ENCODE measurements at regions of chr1 and their contacts with region 1.

Region 1: DNA sequence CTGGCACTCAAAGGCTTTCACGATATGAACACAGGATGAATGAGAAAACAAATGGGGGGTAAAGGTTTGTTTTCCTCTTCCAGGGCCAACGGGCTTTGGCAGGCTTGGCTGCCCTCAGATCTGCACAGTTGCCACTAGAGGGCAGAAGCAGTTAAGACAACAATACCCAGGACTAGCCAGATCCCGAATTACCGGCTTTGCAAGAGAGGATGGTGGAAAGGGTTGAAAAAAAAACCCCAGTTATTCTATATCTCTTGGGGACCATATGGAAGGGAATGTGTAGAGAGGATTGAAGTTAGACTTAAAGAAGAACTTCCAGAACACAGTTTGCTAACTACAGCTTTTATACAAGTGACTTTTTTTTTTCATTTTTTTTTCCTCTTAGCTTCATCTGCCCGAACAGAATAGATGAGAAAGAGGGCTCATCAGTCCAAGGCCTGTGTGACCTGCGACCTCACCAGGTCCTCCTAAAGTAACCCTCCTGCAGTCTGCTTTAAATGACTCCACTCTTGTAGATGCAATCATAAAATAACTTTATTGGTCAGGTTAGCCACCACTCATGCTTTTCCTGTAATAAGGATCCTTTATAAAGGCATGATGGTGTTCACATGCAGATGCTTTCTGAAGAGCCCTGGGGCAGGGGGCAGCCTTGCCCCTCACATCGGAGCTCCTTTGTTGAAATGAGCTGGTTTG is 10.7 kb downstream of the FMOD start:
- DNase-seq: peak; percentile 63
- H3K4me3 ChIP-seq: no peak overlapping the region
- H3K27ac ChIP-seq: no peak overlapping the region
- H3K4me1 ChIP-seq: peaks cover 25% of the 10 kb centered on the region
- H3K27me3 ChIP-seq: no peaks in the 10 kb centered on the region
- CTCF ChIP-seq: peak; percentile 86 to 94

Region 2: DNA sequence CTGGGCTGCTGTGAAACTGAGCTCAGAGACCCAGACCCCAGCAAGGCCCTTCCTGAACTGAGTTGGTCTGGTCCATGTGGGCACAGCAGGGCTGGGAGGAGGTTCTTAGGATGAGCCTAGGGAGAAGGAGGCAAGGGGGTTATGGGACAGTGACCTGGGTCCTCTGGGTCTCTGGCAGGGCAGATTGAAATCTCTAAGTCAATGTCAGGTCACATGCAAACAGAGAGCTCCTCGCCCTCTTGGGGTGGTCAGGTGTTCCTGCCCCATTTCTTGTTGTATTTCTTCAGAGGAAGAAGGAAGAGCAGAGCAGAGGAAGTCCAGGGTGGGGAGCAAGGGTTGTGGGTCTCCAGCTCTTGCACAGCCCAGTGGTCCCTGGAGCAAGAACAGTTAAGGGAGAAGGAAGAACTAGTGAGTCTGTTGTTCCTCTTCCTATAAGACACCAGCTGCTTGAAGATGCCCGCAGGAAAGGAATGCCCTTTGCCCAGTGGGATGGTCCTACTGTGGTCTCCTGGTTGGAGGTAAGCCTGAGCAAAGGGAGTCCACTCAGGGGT is 280.8 kb before region 1 on chr1:
- CTCF ChIA-PET with region 1: no interaction called
- dilution Hi-C with region 1: no loop called
- in situ Hi-C with region 1: no loop called
- intact Hi-C with region 1: no loop called
- DNase-seq: no peak
- H3K4me3 ChIP-seq: no peak overlapping the region
- H3K27ac ChIP-seq: no peak overlapping the region
- H3K4me1 ChIP-seq: no peaks in the 10 kb centered on the region
- H3K27me3 ChIP-seq: no peaks in the 10 kb centered on the region
- CTCF ChIP-seq: no peak

Region 3: GRCh38 chr1:203127666-203128430 is 212.4 kb before region 1 on chr1 and contains the start of gene ADORA1:
- CTCF ChIA-PET with region 1: no interaction called
- dilution Hi-C with region 1: no loop called
- in situ Hi-C with region 1: no loop called
- intact Hi-C with region 1: loop called (anchors 5 kb)
- DNase-seq: peak; percentile 47
- H3K4me3 ChIP-seq: peak within 1 kb of the TSS; percentile 32 to 58 (median 41)
- H3K27ac ChIP-seq: no peak within 1 kb of the TSS
- H3K4me1 ChIP-seq: peaks cover 13% of the 10 kb centered on the region
- H3K27me3 ChIP-seq: no peaks in the 10 kb centered on the region
- CTCF ChIP-seq: peak in 1 of 2 donors; percentile 11
- total RNA-seq, gene ADORA1: 0.96 to 1.7 TPM

Region 4: DNA sequence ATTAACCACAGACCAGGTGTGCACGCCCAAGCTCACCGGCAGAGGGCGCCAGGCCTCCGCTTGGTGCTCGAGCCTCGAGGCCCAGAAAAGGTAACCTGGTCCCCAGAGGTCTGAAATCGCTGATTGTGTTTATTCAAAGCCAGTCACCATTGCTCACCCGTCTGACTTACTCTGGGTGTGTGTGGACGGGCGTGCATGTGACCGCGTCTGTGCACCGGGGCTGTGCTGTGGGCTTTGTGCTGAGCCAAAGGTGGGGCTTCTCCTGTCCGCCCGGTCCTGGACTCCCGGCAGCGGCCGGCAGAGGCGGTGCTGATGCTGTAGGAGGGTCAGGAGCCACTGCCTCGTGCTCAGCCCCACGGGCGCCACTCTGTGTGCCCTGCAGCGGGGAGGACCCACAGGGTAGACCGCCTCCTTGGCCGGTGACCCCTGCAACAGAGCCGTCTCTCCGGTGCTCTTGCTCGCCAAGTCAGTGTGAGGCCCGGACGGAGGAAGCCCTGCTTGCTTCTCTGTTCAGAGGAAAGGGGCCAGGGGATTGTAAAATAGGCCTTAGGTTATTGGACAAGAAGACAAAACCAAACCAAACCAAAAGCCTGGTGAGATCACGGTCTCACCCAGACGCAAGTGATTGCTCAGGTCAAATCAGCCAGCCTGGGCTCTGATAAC is 66.9 kb before region 1 on chr1:
- CTCF ChIA-PET with region 1: interaction called, 5 read pairs
- dilution Hi-C with region 1: loop called (anchors 5 kb)
- in situ Hi-C with region 1: loop called (anchors 5 kb)
- intact Hi-C with region 1: loop called (anchors 1 kb)
- DNase-seq: peak; percentile 93
- H3K4me3 ChIP-seq: no peak overlapping the region
- H3K27ac ChIP-seq: peak overlapping the region; percentile 20
- H3K4me1 ChIP-seq: peaks cover 30% of the 10 kb centered on the region
- H3K27me3 ChIP-seq: no peaks in the 10 kb centered on the region
- CTCF ChIP-seq: peak; percentile 79 to 94

Region 5: GRCh38 chr1:203368624-203369451 is 28.6 kb after region 1 on chr1:
- CTCF ChIA-PET with region 1: no interaction called
- dilution Hi-C with region 1: no loop called
- in situ Hi-C with region 1: no loop called
- intact Hi-C with region 1: loop called (anchors 1 kb)
- DNase-seq: peak; percentile 81
- H3K4me3 ChIP-seq: no peak overlapping the region
- H3K27ac ChIP-seq: no peak overlapping the region
- H3K4me1 ChIP-seq: peaks cover 14% of the 10 kb centered on the region
- H3K27me3 ChIP-seq: no peaks in the 10 kb centered on the region
- CTCF ChIP-seq: peak; percentile 53 to 66

Region 6: GRCh38 chr1:203440771-203441170 is 100.5 kb after region 1 on chr1:
- CTCF ChIA-PET with region 1: interaction called, 5 read pairs
- dilution Hi-C with region 1: no loop called
- in situ Hi-C with region 1: no loop called
- intact Hi-C with region 1: loop called (anchors 1 kb)
- DNase-seq: peak; percentile 30
- H3K4me3 ChIP-seq: no peak overlapping the region
- H3K27ac ChIP-seq: no peak overlapping the region
- H3K4me1 ChIP-seq: no peaks in the 10 kb centered on the region
- H3K27me3 ChIP-seq: peaks cover 2% of the 10 kb centered on the region
- CTCF ChIP-seq: peak; percentile 12 to 58

Region 7: GRCh38 chr1:203702130-203702577 is 361.9 kb after region 1 on chr1:
- CTCF ChIA-PET with region 1: no interaction called
- dilution Hi-C with region 1: no loop called
- in situ Hi-C with region 1: loop called in 1 of 2 experiments (anchors 25 kb)
- intact Hi-C with region 1: loop called (anchors 1 kb)
- DNase-seq: peak; percentile 37
- H3K4me3 ChIP-seq: no peak overlapping the region
- H3K27ac ChIP-seq: no peak overlapping the region
- H3K4me1 ChIP-seq: peaks cover 18% of the 10 kb centered on the region
- H3K27me3 ChIP-seq: no peaks in the 10 kb centered on the region
- CTCF ChIP-seq: peak; percentile 79 to 80

Measured in mammary epithelial cell (primary cell).